ENCODE measurements at regions of chrX and their contacts with region 1.

Region 1: DNA sequence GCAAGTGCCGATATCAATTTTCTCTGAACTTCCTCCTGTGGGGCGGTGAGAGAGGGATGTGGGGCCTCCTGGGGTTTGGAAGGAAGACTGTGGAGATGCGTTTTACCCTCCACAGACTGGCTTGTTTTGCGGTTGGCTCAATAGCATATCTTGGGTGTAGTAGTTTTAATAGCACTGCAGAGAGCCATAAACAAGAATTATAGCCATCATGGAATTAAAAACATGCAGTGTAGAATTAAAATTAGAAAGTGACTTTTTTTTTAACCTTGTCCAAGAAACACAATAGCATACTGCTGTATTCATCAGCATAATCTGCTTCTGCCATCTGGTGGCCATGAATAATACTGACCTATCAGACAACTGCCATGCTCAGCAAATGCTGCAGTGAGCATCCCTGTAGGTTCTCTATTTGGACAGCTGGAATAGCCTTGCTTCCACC is 47.3 kb upstream of the SCML1 start:
- DNase-seq: peak in 1 of 2 donors; percentile 14
- ATAC-seq: peak; percentile 71 to 89
- H3K4me3 ChIP-seq: no peak overlapping the region
- H3K27ac ChIP-seq: no peak overlapping the region
- H3K4me1 ChIP-seq: no peaks in the 10 kb centered on the region
- H3K27me3 ChIP-seq: no peaks in the 10 kb centered on the region
- CTCF ChIP-seq: peak in 4 of 5 experiments; percentile 49 to 68 (median 57)
- POLR2A ChIP-seq: no peak

Region 2: GRCh38 chrX:17242470-17242869 is 447.5 kb before region 1 on chrX:
- in situ Hi-C with region 1: loop called (anchors 5 to 25 kb)
- intact Hi-C with region 1: loop called (anchors 2 kb)
- DNase-seq: peak in 1 of 2 donors; percentile 10
- ATAC-seq: no peak
- H3K4me3 ChIP-seq: no peak overlapping the region
- H3K27ac ChIP-seq: no peak overlapping the region
- H3K4me1 ChIP-seq: no peaks in the 10 kb centered on the region
- H3K27me3 ChIP-seq: no peaks in the 10 kb centered on the region
- CTCF ChIP-seq: peak; percentile 33 to 72 (median 59)
- POLR2A ChIP-seq: no peak

Region 3: GRCh38 chrX:17535229-17535628 is 154.8 kb before region 1 on chrX:
- in situ Hi-C with region 1: loop called in 2 of 4 experiments (anchors 25 kb)
- intact Hi-C with region 1: loop called (anchors 10 kb)
- DNase-seq: peak in 1 of 2 donors; percentile 11
- ATAC-seq: no peak
- H3K4me3 ChIP-seq: no peak overlapping the region
- H3K27ac ChIP-seq: no peak overlapping the region
- H3K4me1 ChIP-seq: no peaks in the 10 kb centered on the region
- H3K27me3 ChIP-seq: no peaks in the 10 kb centered on the region
- CTCF ChIP-seq: peak in 3 of 5 experiments; percentile 7 to 48 (median 33)
- POLR2A ChIP-seq: no peak

Region 4: DNA sequence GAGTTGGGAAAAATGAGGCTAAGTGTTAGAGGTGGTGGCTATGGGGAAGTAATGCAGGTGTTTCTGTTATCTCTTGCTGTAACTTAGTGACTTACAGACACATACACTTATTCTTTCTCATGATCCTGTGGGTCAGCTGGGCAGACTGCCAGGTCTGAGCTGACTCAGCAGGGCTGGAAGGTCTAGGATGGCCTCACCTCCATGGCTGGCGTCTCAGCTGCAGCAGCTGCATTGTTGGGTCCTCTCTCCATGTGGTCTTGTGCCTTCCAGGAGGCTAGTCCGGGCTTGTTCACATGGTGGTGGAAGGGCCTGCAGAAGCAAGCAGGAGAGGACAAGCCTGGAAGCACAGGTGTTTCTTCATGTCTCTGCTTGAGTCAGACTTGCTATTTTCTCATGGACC is 142.3 kb before region 1 on chrX:
- in situ Hi-C with region 1: loop called in 2 of 4 experiments (anchors 25 kb)
- intact Hi-C with region 1: no loop called
- DNase-seq: peak in 1 of 2 donors; percentile 49
- ATAC-seq: peak; percentile 23 to 83
- H3K4me3 ChIP-seq: no peak overlapping the region
- H3K27ac ChIP-seq: no peak overlapping the region
- H3K4me1 ChIP-seq: no peaks in the 10 kb centered on the region
- H3K27me3 ChIP-seq: no peaks in the 10 kb centered on the region
- CTCF ChIP-seq: no peak
- POLR2A ChIP-seq: no peak

Region 5: DNA sequence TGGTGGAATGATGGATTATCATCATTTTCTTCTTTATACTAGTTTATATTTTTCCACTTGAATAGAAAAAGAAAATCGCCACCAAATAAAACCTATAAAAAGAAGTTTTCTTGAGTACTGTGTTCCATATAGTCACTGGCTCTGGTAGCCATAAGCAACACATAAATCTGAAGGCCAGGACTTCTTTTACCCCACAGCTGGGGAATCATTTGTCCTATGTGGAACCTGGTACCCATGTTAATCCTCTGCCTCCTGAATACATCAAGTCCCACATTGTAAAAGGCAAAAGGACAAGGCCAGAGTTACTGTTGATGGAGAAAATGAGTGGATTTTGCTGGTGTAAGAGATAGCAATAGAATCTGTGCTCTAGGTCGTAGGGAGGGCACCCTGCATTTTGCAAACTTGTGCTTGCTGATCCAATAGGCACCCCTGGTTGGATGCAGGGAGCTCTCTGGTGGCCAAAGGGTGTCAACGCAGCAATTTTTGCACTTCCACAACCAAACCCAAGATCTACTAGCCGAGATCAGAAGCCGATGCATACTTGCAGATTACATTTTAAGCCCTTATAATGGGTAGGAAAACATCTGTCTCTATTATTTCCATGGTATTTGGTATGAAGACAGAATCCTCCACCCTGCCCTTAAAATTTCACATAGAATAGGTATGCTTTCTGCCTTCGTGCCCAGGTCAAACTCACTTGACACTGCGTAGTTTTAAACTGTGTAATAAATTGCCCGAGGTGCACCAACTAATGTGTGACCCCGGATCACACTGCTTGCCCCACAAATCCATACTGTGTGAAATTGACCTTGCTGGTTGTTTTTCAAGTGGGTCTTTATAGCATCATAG is 98.9 kb before region 1 on chrX:
- in situ Hi-C with region 1: no loop called
- intact Hi-C with region 1: loop called (anchors 10 kb)
- DNase-seq: peak; percentile 9 to 41
- ATAC-seq: peak; percentile 85 to 86
- H3K4me3 ChIP-seq: no peak overlapping the region
- H3K27ac ChIP-seq: peak overlapping the region in 3 of 4 donors; percentile 7 to 62 (median 57)
- H3K4me1 ChIP-seq: peaks cover 0 to 5% of the 10 kb centered on the region in 2 donors
- H3K27me3 ChIP-seq: no peaks in the 10 kb centered on the region
- CTCF ChIP-seq: peak; percentile 31 to 71 (median 47)
- POLR2A ChIP-seq: no peak